WTC11 (cell line): ENCODE measurements at regions of chr15 and their contacts with region 1.

Region 1: GRCh38 chr15:29139540-29140459 is 129.8 kb downstream of the NSMCE3 start:
- DNase-seq: peak; percentile 89
- ATAC-seq: peak; percentile 93
- H3K4me3 Mint-ChIP-seq: peak overlapping the region; percentile 75
- H3K27ac Mint-ChIP-seq: peak overlapping the region; percentile 29
- H3K4me1 Mint-ChIP-seq: peaks cover 28% of the 10 kb centered on the region
- H3K27me3 Mint-ChIP-seq: no peaks in the 10 kb centered on the region
- CTCF ChIP-seq: peak; percentile 87

Region 2: GRCh38 chr15:28944696-28945300 is 195.0 kb before region 1 on chr15:
- CTCF ChIA-PET with region 1: no interaction called
- POLR2A ChIA-PET with region 1: no interaction called
- DNase-seq: no peak
- ATAC-seq: no peak
- H3K4me3 Mint-ChIP-seq: no peak overlapping the region
- H3K27ac Mint-ChIP-seq: no peak overlapping the region
- H3K4me1 Mint-ChIP-seq: peaks cover 8% of the 10 kb centered on the region
- H3K27me3 Mint-ChIP-seq: no peaks in the 10 kb centered on the region
- CTCF ChIP-seq: no peak

Region 3: DNA sequence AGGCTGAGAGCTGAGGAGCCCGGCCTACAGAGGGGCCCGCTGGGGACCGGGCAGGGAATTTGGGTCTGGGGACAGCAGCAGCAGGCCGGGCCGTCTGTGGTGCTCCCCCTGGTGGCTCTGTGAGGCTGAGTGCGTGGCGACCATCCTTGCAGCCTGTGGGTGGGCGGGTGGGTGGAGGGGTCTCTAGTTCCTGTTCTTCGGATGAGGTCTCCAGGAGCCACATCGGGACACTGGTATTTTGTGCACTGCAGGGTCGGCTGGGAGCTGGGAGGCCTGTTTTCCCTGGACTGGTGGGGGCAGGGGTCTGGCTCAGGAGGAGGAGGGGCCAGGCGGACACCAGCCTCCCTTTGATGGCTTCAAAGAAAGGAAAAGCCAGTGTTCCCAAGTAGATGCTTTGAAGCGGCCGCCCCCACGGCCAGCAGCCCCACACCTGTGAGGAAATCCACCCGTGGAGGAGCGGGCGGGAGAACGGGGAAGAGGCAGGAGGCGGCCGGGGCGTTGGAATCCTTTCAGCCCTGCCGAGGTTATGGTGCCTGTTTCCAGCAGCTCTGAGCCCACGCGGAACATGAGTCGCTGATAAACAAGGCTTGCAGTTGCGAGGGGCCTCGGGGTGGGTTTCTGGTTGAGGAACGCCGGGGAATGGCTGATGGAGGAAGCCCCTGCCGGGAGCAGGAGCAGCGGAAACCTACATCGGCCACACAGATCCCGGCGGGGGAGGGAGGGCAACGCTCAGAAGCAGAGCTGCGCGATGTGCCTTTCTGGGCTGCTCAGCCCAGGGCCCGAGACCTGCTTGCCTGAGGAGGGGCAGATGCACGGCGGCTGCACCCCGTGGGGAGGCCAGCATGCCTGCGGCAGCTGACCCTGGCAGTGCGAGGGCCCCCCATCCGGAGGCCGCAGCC is 24.5 kb before region 1 on chr15:
- CTCF ChIA-PET with region 1: interaction called, 68 read pairs
- POLR2A ChIA-PET with region 1: interaction called, 4 read pairs
- DNase-seq: peak; percentile 69
- ATAC-seq: peak; percentile 73
- H3K4me3 Mint-ChIP-seq: peak overlapping the region; percentile 59
- H3K27ac Mint-ChIP-seq: no peak overlapping the region
- H3K4me1 Mint-ChIP-seq: peaks cover 10% of the 10 kb centered on the region
- H3K27me3 Mint-ChIP-seq: no peaks in the 10 kb centered on the region
- CTCF ChIP-seq: peak; percentile 44; the same call in 1 of the 2 replicates

Region 4: GRCh38 chr15:29162411-29162810 is 22.6 kb after region 1 on chr15:
- CTCF ChIA-PET with region 1: interaction called, 14 read pairs
- POLR2A ChIA-PET with region 1: no interaction called
- DNase-seq: no peak
- ATAC-seq: no peak
- H3K4me3 Mint-ChIP-seq: no peak overlapping the region
- H3K27ac Mint-ChIP-seq: no peak overlapping the region
- H3K4me1 Mint-ChIP-seq: peaks cover 16% of the 10 kb centered on the region
- H3K27me3 Mint-ChIP-seq: no peaks in the 10 kb centered on the region; the same call in 1 of the 2 replicates
- CTCF ChIP-seq: no peak

Region 5: GRCh38 chr15:29259233-29259632 is 119.4 kb after region 1 on chr15:
- CTCF ChIA-PET with region 1: interaction called, 23 read pairs
- POLR2A ChIA-PET with region 1: no interaction called
- DNase-seq: no peak
- ATAC-seq: peak; percentile 65
- H3K4me3 Mint-ChIP-seq: no peak overlapping the region
- H3K27ac Mint-ChIP-seq: peak overlapping the region; percentile 5; the same call in 1 of the 2 replicates
- H3K4me1 Mint-ChIP-seq: peaks cover 14% of the 10 kb centered on the region
- H3K27me3 Mint-ChIP-seq: no peaks in the 10 kb centered on the region
- CTCF ChIP-seq: no peak

Region 6: DNA sequence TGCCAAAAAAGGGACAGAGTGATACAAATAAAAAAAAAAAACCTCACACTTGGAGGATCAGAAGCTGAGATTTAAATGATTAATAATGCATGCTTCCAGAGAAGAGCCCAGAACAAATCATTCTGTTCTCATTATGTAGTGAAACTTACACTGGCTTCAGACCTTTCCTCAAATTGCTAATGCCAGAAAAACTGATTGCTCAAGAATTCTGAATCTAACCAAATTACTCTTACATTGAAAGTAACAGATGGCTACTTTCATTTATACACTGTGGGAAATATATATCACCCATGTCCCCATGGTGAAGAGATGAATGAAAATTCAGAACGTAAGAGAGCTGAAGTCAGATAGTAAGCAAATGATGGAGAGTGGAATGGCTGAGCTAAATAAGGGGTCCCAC is 215.7 kb after region 1 on chr15:
- CTCF ChIA-PET with region 1: no interaction called
- POLR2A ChIA-PET with region 1: no interaction called
- DNase-seq: no peak
- ATAC-seq: no peak
- H3K4me3 Mint-ChIP-seq: no peak overlapping the region
- H3K27ac Mint-ChIP-seq: no peak overlapping the region
- H3K4me1 Mint-ChIP-seq: no peaks in the 10 kb centered on the region
- H3K27me3 Mint-ChIP-seq: no peaks in the 10 kb centered on the region
- CTCF ChIP-seq: no peak

Region 7: GRCh38 chr15:29410338-29410737 is 270.5 kb after region 1 on chr15:
- CTCF ChIA-PET with region 1: interaction called, 13 read pairs
- POLR2A ChIA-PET with region 1: no interaction called
- DNase-seq: peak; percentile 36
- ATAC-seq: peak; percentile 95
- H3K4me3 Mint-ChIP-seq: no peak overlapping the region
- H3K27ac Mint-ChIP-seq: peak overlapping the region; percentile 52
- H3K4me1 Mint-ChIP-seq: peaks cover 22% of the 10 kb centered on the region
- H3K27me3 Mint-ChIP-seq: peaks cover 6% of the 10 kb centered on the region
- CTCF ChIP-seq: no peak

Region 8: GRCh38 chr15:29451201-29451781 is 311.5 kb after region 1 on chr15:
- CTCF ChIA-PET with region 1: interaction called, 13 read pairs
- POLR2A ChIA-PET with region 1: no interaction called
- DNase-seq: peak; percentile 58
- ATAC-seq: peak; percentile 87
- H3K4me3 Mint-ChIP-seq: no peak overlapping the region
- H3K27ac Mint-ChIP-seq: no peak overlapping the region
- H3K4me1 Mint-ChIP-seq: peaks cover 32% of the 10 kb centered on the region
- H3K27me3 Mint-ChIP-seq: no peaks in the 10 kb centered on the region
- CTCF ChIP-seq: no peak